Naive thymus-derived CD4-positive, alpha-beta T cell (primary cell): ENCODE measurements at regions of chr16 and their contacts with region 1.

Region 1: GRCh38 chr16:71961066-71962039 is 38.8 kb downstream of the PKD1L3 start:
- DNase-seq: peak; percentile 52 to 81 (median 74)
- ATAC-seq: peak; percentile 98
- H3K4me3 ChIP-seq: no peak overlapping the region
- H3K4me3 Mint-ChIP-seq: no peak overlapping the region
- H3K27ac ChIP-seq: no peak overlapping the region
- H3K27ac Mint-ChIP-seq: no peak overlapping the region
- H3K4me1 ChIP-seq: no peaks in the 10 kb centered on the region
- H3K4me1 Mint-ChIP-seq: peaks cover 3 to 24% (median 17%) of the 10 kb centered on the region in 7 donors
- H3K27me3 ChIP-seq: no peaks in the 10 kb centered on the region
- H3K27me3 Mint-ChIP-seq: peaks cover 0 to 8% (median 0%) of the 10 kb centered on the region in 5 donors

Region 2: DNA sequence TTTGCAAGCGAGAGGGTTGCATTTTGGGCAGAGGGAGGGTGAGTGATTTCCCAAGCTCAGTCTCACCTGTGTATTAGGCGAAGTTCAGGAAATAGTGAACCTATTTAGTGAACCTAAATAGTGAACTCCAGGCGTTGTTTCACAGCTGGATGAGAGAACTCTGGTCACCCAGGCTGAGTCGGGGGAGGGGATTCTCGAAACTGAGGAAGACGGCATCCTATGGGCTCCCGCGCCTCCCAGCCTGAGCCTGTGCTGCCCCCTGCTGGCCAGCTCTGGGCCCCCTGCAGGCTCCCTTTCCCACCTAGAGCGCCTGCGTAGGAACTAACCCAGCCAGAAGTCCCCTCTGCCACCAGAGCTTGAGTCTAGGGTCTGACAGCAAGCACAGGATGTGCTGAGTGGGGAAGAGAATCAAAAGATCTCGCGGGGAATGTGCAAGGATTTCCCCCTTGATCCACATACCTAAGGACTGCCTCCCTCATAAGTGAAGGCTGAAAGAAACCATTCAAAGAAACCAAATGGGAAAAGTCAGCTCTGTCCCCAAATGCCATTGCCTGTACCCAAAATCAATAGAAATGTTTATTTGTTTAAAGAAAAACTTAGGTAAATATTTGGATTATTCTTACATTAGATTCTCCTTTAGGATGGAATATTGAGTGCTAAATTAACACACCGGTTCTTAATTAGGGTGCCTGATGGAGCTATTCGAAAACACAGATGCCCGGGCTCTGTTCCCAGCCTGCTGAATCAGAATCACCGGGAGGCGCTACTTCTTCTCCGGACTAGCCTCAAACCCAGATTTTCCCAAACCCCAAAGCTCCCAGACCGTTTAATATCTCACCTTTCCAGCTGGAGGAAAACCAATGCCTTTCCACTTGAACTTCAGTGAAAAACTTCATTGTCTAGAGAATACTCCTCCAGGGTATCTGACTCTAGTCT is 350.1 kb before region 1 on chr16:
- CTCF ChIA-PET with region 1: interaction called, 3 read pairs
- POLR2A ChIA-PET with region 1: no interaction called
- intact Hi-C with region 1: loop called in 1 of 2 experiments (anchors 5 kb)
- DNase-seq: peak; percentile 43 to 82 (median 72)
- ATAC-seq: peak; percentile 96
- H3K4me3 ChIP-seq: no peak overlapping the region
- H3K4me3 Mint-ChIP-seq: peak overlapping the region in 4 of 10 donors; percentile 21 to 56 (median 38)
- H3K27ac ChIP-seq: no peak overlapping the region
- H3K27ac Mint-ChIP-seq: no peak overlapping the region
- H3K4me1 ChIP-seq: no peaks in the 10 kb centered on the region
- H3K4me1 Mint-ChIP-seq: peaks cover 0 to 5% (median 0%) of the 10 kb centered on the region in 7 donors
- H3K27me3 ChIP-seq: no peaks in the 10 kb centered on the region
- H3K27me3 Mint-ChIP-seq: peaks cover 11 to 36% (median 22%) of the 10 kb centered on the region in 5 donors

Region 3: DNA sequence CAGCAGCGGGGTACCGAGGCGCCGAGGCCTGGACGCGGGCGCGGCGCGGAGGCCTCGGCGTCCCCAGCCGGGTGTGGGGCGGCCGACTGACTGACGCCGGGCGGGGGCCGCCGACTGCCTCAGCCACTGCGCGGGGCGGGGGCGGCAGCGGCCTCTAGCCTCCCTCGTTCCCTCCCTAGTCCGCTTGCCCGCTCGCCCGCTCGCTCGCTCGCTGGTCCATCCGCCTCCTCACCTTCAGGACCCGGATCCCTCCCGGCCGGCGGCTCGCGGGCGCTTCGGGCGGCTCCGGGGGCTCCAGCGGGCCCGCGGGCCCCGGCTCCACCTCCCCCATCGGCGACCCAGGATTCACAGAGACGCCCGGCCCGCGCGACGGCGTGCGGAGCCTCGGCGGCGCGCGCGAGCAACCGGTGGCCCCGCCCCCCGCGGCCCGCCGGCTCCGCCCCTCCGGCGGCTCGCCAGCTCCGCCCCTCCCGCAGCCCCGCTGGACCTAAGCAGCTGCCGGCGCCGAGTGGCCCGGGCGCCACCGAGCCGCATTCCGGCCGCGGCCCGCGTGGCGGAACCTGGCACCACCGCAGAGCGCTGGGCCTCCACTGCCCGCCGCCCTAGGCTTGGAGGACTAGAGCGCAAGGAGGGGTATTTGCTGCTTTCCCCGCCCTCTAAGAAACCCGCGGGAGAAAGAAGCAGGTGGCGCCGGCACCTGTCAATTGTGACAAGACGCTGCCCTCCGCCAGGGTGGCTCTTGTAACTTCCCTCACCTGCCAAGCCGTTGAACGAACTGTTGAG is 237.6 kb before region 1 on chr16:
- CTCF ChIA-PET with region 1: no interaction called
- POLR2A ChIA-PET with region 1: no interaction called
- intact Hi-C with region 1: loop called (anchors 1 kb)
- DNase-seq: peak; percentile 81 to 93 (median 88)
- ATAC-seq: peak; percentile 93
- H3K4me3 ChIP-seq: peak overlapping the region; percentile 79
- H3K4me3 Mint-ChIP-seq: peak overlapping the region; percentile 80 to 97 (median 86)
- H3K27ac ChIP-seq: peak overlapping the region; percentile 79
- H3K27ac Mint-ChIP-seq: peak overlapping the region in 8 of 9 donors; percentile 30 to 92 (median 78)
- H3K4me1 ChIP-seq: peaks cover 9% of the 10 kb centered on the region in 2 donors
- H3K4me1 Mint-ChIP-seq: peaks cover 7 to 20% (median 19%) of the 10 kb centered on the region in 7 donors
- H3K27me3 ChIP-seq: no peaks in the 10 kb centered on the region
- H3K27me3 Mint-ChIP-seq: peaks cover 0 to 17% (median 0%) of the 10 kb centered on the region in 5 donors

Region 4: GRCh38 chr16:71767060-71767900 is 194.1 kb before region 1 on chr16:
- CTCF ChIA-PET with region 1: no interaction called
- POLR2A ChIA-PET with region 1: no interaction called
- intact Hi-C with region 1: loop called in 1 of 2 experiments (anchors 5 kb)
- DNase-seq: no peak
- ATAC-seq: no peak
- H3K4me3 ChIP-seq: no peak overlapping the region
- H3K4me3 Mint-ChIP-seq: peak overlapping the region in 3 of 10 donors; percentile 18 to 47 (median 42)
- H3K27ac ChIP-seq: no peak overlapping the region
- H3K27ac Mint-ChIP-seq: peak overlapping the region; percentile 30 to 72 (median 48)
- H3K4me1 ChIP-seq: peaks cover 0 to 10% of the 10 kb centered on the region in 2 donors
- H3K4me1 Mint-ChIP-seq: peaks cover 0 to 22% (median 15%) of the 10 kb centered on the region in 7 donors
- H3K27me3 ChIP-seq: no peaks in the 10 kb centered on the region
- H3K27me3 Mint-ChIP-seq: no peaks in the 10 kb centered on the region

Region 5: GRCh38 chr16:71808593-71809459 is 152.5 kb before region 1 on chr16 and contains the start of gene AP1G1:
- CTCF ChIA-PET with region 1: interaction called, 4 read pairs
- POLR2A ChIA-PET with region 1: interaction called, 5 read pairs
- intact Hi-C with region 1: loop called (anchors 1 to 2 kb)
- DNase-seq: peak; percentile 78 to 98 (median 94)
- ATAC-seq: peak; percentile 95
- H3K4me3 ChIP-seq: peak within 1 kb of the TSS; percentile 99
- H3K4me3 Mint-ChIP-seq: peak within 1 kb of the TSS; percentile 86 to 99 (median 97)
- H3K27ac ChIP-seq: peak within 1 kb of the TSS; percentile 99
- H3K27ac Mint-ChIP-seq: peak within 1 kb of the TSS; percentile 98 to 100 (median 100)
- H3K4me1 ChIP-seq: peaks cover 22 to 24% of the 10 kb centered on the region in 2 donors
- H3K4me1 Mint-ChIP-seq: peaks cover 7 to 68% (median 37%) of the 10 kb centered on the region in 7 donors
- H3K27me3 ChIP-seq: no peaks in the 10 kb centered on the region
- H3K27me3 Mint-ChIP-seq: peaks cover 0 to 2% (median 0%) of the 10 kb centered on the region in 5 donors
- total RNA-seq, gene AP1G1: 95.3 to 147 (median 100.0) TPM

Region 6: GRCh38 chr16:71883849-71884638 is 77.3 kb before region 1 on chr16 and contains the start of gene ZNF821:
- CTCF ChIA-PET with region 1: interaction called, 3 read pairs
- POLR2A ChIA-PET with region 1: interaction called, 4 read pairs
- intact Hi-C with region 1: loop called (anchors 1 kb)
- DNase-seq: peak; percentile 62 to 81 (median 68)
- ATAC-seq: peak; percentile 68
- H3K4me3 ChIP-seq: peak within 1 kb of the TSS; percentile 67
- H3K4me3 Mint-ChIP-seq: peak within 1 kb of the TSS; percentile 84 to 99 (median 96)
- H3K27ac ChIP-seq: peak within 1 kb of the TSS; percentile 84
- H3K27ac Mint-ChIP-seq: peak within 1 kb of the TSS; percentile 88 to 97 (median 95)
- H3K4me1 ChIP-seq: peaks cover 30 to 33% of the 10 kb centered on the region in 2 donors
- H3K4me1 Mint-ChIP-seq: peaks cover 44 to 56% (median 50%) of the 10 kb centered on the region in 7 donors
- H3K27me3 ChIP-seq: no peaks in the 10 kb centered on the region
- H3K27me3 Mint-ChIP-seq: peaks cover 0 to 20% (median 0%) of the 10 kb centered on the region in 5 donors
- total RNA-seq, gene ZNF821: 2.6 to 13.3 (median 7.0) TPM

Region 7: GRCh38 chr16:71919035-71919434 is 42.3 kb before region 1 on chr16:
- CTCF ChIA-PET with region 1: no interaction called
- POLR2A ChIA-PET with region 1: no interaction called
- intact Hi-C with region 1: loop called in 1 of 2 experiments (anchors 5 kb)
- DNase-seq: no peak
- ATAC-seq: peak; percentile 52
- H3K4me3 ChIP-seq: no peak overlapping the region
- H3K4me3 Mint-ChIP-seq: no peak overlapping the region
- H3K27ac ChIP-seq: no peak overlapping the region
- H3K27ac Mint-ChIP-seq: peak overlapping the region in 2 of 9 donors; percentile 63 to 70
- H3K4me1 ChIP-seq: peaks cover 6% of the 10 kb centered on the region in 2 donors
- H3K4me1 Mint-ChIP-seq: peaks cover 21 to 52% (median 39%) of the 10 kb centered on the region in 7 donors
- H3K27me3 ChIP-seq: no peaks in the 10 kb centered on the region
- H3K27me3 Mint-ChIP-seq: no peaks in the 10 kb centered on the region

Region 8: GRCh38 chr16:72036098-72036497 is 74.7 kb after region 1 on chr16:
- CTCF ChIA-PET with region 1: no interaction called
- POLR2A ChIA-PET with region 1: no interaction called
- intact Hi-C with region 1: no loop called
- DNase-seq: no peak
- ATAC-seq: no peak
- H3K4me3 ChIP-seq: no peak overlapping the region
- H3K4me3 Mint-ChIP-seq: no peak overlapping the region
- H3K27ac ChIP-seq: no peak overlapping the region
- H3K27ac Mint-ChIP-seq: no peak overlapping the region
- H3K4me1 ChIP-seq: no peaks in the 10 kb centered on the region
- H3K4me1 Mint-ChIP-seq: no peaks in the 10 kb centered on the region
- H3K27me3 ChIP-seq: no peaks in the 10 kb centered on the region
- H3K27me3 Mint-ChIP-seq: no peaks in the 10 kb centered on the region